ENCODE measurements at regions of chr20 and their contacts with region 1.

Region 1: DNA sequence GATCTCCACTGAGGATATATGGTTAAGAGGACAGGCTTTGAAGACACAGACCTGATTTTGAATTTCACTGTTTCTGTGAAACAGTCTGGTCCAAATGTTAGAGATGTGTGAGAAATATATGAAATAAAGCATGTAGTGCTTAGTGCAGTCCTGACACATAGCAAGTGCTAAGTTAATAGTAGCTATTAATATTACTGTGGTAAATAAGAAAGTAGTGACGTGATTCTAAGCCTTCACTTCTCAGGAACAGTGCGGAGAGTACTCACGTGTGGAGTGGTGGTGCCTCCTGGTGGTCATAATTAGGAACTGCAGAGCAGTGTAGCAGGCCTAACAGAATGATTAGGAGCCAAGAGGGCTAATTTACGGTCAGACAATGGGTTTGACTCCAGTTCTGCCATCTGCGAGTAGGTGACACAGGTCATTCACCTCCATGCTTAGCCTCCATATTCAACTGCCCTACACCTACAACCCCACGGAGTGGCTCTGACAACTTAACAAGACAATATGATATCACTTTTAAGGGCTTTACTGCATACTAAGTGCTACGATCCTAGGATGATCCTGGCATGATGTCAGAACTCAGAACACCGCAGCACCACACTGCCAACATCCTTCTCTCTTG is 106.2 kb downstream of the JPH2 start:
- DNase-seq: peak; percentile 52 to 69
- ATAC-seq: peak; percentile 68 to 88 (median 84)
- H3K4me3 ChIP-seq: no peak overlapping the region
- H3K27ac ChIP-seq: no peak overlapping the region
- H3K4me1 ChIP-seq: peaks cover 0 to 17% (median 4%) of the 10 kb centered on the region in 9 donors
- H3K27me3 ChIP-seq: no peaks in the 10 kb centered on the region
- CTCF ChIP-seq: peak; percentile 95 to 100 (median 98)

Region 2: GRCh38 chr20:43448748-43449535 is 631.8 kb before region 1 on chr20:
- intact Hi-C with region 1: loop called in 4 of 10 experiments (anchors 10 kb)
- DNase-seq: no peak
- ATAC-seq: peak in 7 of 8 donors; percentile 35 to 79 (median 64)
- H3K4me3 ChIP-seq: no peak overlapping the region
- H3K27ac ChIP-seq: no peak overlapping the region
- H3K4me1 ChIP-seq: peaks cover 0 to 8% (median 0%) of the 10 kb centered on the region in 9 donors
- H3K27me3 ChIP-seq: peaks cover 0 to 25% (median 13%) of the 10 kb centered on the region in 7 donors
- CTCF ChIP-seq: peak; percentile 36 to 70 (median 63)

Region 3: DNA sequence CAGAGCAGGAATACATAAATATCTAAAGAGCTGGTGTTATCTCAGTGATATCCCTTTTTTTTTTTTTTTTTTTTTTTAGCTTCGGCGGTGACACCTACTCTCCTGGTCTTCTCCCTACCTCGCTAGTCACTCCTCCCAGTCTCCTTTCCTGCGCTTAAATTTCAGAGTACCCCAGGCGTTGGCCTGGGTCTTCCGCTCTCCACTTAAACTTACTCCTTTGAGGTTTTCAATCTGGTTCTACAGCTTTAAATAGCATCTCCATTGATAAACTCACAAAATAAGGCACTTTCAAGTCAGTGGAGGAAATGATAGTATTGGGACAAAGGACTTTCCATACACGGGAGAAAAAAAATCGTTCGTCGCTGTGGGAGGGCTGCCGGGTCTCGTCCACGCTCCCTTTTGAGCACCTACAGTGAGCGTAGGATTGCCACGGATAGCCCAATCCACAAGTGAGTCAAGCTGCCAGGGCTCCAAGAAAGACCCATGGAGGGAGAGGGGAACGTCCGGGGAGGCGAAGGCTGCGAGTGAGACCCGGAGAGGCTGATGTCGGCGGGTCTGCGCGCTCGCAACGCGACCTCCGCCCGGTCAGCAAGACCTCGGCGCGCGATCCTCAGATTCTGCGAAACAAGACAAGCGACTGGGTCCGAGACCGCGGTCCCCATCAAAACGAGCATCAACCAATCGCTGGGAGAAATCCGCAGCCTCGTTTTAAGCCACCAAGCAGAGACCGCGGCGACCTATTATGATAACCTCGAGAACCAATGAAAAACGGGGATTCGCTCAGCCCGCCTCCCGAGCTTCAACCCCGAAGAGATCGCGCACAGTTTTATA is 623.7 kb before region 1 on chr20:
- intact Hi-C with region 1: loop called in 2 of 10 experiments (anchors 10 kb)
- DNase-seq: peak; percentile 79 to 93
- ATAC-seq: peak; percentile 83 to 95 (median 90)
- H3K4me3 ChIP-seq: peak overlapping the region; percentile 73 to 99 (median 92)
- H3K27ac ChIP-seq: peak overlapping the region; percentile 97 to 100 (median 100)
- H3K4me1 ChIP-seq: peaks cover 2 to 41% (median 28%) of the 10 kb centered on the region in 9 donors
- H3K27me3 ChIP-seq: peaks cover 0 to 5% (median 0%) of the 10 kb centered on the region in 7 donors
- CTCF ChIP-seq: no peak

Region 4: DNA sequence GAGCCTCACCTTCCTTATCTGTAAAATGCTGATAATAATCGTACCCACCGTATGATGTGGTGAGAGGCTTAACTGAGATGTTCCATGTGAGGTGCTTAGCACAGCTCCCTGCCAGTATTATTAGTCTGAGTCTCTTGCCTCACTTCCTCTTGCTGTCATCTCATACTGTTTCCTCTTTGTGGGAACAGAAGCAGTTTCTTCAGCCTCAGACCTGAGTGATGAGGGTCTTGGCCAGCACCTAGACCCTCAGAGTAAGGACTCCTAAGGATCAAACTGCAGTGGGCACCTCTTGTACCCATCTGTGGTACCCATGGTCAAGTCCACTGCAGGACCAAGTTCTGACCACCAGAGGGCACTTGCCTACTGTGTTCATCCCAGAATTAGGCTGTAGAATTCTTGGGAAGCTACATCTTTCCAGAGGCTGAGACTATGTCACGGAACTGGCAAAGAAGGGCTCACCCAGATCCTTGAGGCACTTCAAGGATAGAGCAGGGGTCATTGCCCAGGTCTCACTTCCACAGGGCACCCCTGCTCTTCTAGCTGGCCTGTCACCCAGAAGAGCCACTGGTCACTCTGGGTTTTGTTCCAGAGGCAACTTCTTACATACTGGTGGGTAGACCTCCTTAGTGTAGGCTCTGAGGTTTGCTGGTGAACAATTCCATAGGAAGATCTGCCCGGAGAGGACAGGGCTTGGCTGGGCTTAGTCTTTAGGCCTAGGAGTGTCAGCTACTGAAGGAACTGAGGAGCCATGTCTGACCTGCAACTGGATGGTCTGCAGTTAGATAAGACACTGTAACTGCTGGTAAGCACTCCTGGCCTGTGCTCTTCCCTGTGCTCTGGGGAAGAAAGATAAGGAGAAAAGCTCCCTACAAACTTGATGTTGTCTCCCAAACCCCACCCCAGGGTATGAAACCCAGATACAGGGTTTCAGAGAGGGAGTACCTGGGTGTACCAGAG is 542.6 kb before region 1 on chr20:
- intact Hi-C with region 1: loop called in 9 of 10 experiments (anchors 2 to 10 kb)
- DNase-seq: peak; percentile 61 to 63
- ATAC-seq: peak; percentile 47 to 68 (median 65)
- H3K4me3 ChIP-seq: no peak overlapping the region
- H3K27ac ChIP-seq: no peak overlapping the region
- H3K4me1 ChIP-seq: peaks cover 0 to 8% (median 0%) of the 10 kb centered on the region in 9 donors
- H3K27me3 ChIP-seq: no peaks in the 10 kb centered on the region
- CTCF ChIP-seq: peak; percentile 83 to 92 (median 89)

Region 5: DNA sequence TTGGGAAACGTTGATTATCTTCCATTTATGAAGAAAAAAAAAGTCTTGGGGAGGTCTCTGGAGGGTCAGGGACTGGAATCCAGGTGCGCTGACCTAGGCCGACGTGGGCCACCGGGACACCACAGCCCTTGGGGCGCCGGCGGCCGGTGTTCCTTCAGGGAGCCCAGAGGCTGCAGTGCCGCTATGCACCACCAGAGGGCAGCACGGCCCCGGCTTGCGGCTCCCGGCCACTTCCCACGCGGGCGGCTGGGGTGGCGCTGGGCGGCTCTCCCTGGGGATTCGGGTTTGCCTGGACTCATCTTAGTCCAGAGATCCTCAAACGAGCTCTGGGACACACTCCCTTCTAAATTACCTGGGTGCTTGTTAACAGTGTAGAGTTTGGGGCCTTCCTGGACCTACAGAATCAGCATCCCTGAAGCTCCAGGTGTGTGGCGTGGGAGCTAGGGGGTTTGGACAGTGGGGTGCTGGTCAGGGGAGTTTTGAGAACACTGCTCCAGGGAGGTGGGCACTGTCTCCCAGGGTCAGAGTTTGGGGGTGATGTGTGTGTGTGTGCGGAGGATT is 330.9 kb before region 1 on chr20:
- intact Hi-C with region 1: loop called (anchors 1 to 5 kb)
- DNase-seq: peak; percentile 65 to 84
- ATAC-seq: peak; percentile 62 to 87 (median 84)
- H3K4me3 ChIP-seq: no peak overlapping the region
- H3K27ac ChIP-seq: no peak overlapping the region
- H3K4me1 ChIP-seq: peaks cover 0 to 52% (median 0%) of the 10 kb centered on the region in 9 donors
- H3K27me3 ChIP-seq: peaks cover 0 to 46% (median 19%) of the 10 kb centered on the region in 7 donors
- CTCF ChIP-seq: peak; percentile 99 to 100 (median 99)

Region 6: GRCh38 chr20:43840382-43841070 is 240.2 kb before region 1 on chr20:
- intact Hi-C with region 1: loop called in 7 of 10 experiments (anchors 2 to 10 kb)
- DNase-seq: no peak
- ATAC-seq: no peak
- H3K4me3 ChIP-seq: no peak overlapping the region
- H3K27ac ChIP-seq: no peak overlapping the region
- H3K4me1 ChIP-seq: peaks cover 0 to 14% (median 0%) of the 10 kb centered on the region in 9 donors
- H3K27me3 ChIP-seq: peaks cover 0 to 15% (median 4%) of the 10 kb centered on the region in 7 donors
- CTCF ChIP-seq: peak in 6 of 9 donors; percentile 11 to 38 (median 33)

Region 7: DNA sequence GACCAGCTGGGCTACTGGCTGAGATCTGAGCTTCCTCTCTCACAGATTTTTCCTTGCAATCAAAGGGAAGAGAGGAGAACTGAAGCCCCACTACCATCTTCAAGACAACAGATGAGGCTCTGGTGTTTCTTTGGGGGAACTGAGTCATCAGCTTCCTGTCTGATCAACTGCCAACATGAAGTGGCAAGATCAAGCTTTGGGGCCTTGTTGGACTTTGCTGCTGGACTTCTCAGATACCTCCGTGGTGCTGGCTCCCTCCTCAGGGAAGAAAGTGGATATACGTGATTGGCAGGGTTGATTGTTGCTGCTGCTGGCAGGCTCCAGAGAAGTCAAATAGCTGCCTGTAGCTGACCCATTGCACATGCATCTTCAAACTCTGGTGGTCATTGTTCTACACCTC is 169.7 kb before region 1 on chr20:
- intact Hi-C with region 1: no loop called
- DNase-seq: no peak
- ATAC-seq: no peak
- H3K4me3 ChIP-seq: no peak overlapping the region
- H3K27ac ChIP-seq: no peak overlapping the region
- H3K4me1 ChIP-seq: peaks cover 0 to 16% (median 4%) of the 10 kb centered on the region in 9 donors
- H3K27me3 ChIP-seq: peaks cover 0 to 44% (median 23%) of the 10 kb centered on the region in 7 donors
- CTCF ChIP-seq: peak in 1 of 9 donors; percentile 11

Region 8: GRCh38 chr20:44056010-44056698 is 24.6 kb before region 1 on chr20:
- intact Hi-C with region 1: loop called in 1 of 10 experiments (anchors 1 kb)
- DNase-seq: no peak
- ATAC-seq: peak in 6 of 8 donors; percentile 38 to 75 (median 68)
- H3K4me3 ChIP-seq: no peak overlapping the region
- H3K27ac ChIP-seq: no peak overlapping the region
- H3K4me1 ChIP-seq: no peaks in the 10 kb centered on the region
- H3K27me3 ChIP-seq: no peaks in the 10 kb centered on the region
- CTCF ChIP-seq: peak in 8 of 9 donors; percentile 17 to 59 (median 50)